Naive thymus-derived CD4-positive, alpha-beta T cell (primary cell): ENCODE measurements at regions of chr4 and their contacts with region 1.

Region 1: GRCh38 chr4:15001869-15002658 is at the start of gene CPEB2:
- DNase-seq: peak; percentile 88 to 95 (median 93)
- ATAC-seq: peak; percentile 81
- H3K4me3 ChIP-seq: peak within 1 kb of the TSS; percentile 99
- H3K4me3 Mint-ChIP-seq: peak within 1 kb of the TSS; percentile 86 to 95 (median 93)
- H3K27ac ChIP-seq: peak within 1 kb of the TSS; percentile 100
- H3K27ac Mint-ChIP-seq: peak within 1 kb of the TSS; percentile 90 to 98 (median 97)
- H3K4me1 ChIP-seq: peaks cover 7 to 10% of the 10 kb centered on the region in 2 donors
- H3K4me1 Mint-ChIP-seq: peaks cover 17 to 29% (median 24%) of the 10 kb centered on the region in 7 donors
- H3K27me3 ChIP-seq: no peaks in the 10 kb centered on the region
- H3K27me3 Mint-ChIP-seq: no peaks in the 10 kb centered on the region
- total RNA-seq, gene CPEB2: 11.1 to 21.7 (median 14.9) TPM

Region 2: DNA sequence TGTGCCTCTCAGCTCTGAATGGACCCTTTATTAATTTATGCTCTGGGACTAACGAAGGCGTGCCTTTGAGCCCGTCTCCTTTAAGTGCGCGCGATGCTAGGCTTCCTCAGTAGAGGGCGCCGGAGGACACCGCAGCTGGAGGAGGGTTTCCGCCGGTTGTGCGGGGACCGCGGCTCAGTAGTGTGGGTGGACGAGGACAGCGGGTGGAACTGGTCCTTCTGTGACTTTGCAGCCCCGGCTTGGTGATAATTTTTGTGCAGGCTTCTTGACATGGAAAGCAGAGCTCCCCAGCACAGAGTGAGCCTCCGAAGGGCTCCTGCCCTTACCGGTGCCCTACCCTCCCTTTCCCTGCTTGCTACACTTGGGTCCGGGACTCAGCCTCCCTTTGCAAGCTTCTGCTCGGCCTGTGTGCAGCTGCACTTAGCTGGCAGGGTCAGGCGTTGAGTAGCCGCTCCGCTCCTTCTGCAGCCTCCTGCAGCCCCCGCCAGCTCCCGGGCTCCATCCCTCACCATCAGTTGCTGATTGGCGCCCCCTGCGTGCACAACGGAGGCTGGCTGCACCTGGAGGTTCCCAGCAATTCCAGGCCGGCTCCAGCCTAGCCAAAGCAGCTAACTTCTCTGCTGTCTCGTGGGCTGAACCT is 1347.8 kb before region 1 on chr4:
- CTCF ChIA-PET with region 1: interaction called, 3 read pairs
- POLR2A ChIA-PET with region 1: interaction called, 4 read pairs
- intact Hi-C with region 1: loop called (anchors 1 to 5 kb)
- DNase-seq: peak; percentile 46 to 84 (median 69)
- ATAC-seq: peak; percentile 97
- H3K4me3 ChIP-seq: peak overlapping the region; percentile 77
- H3K4me3 Mint-ChIP-seq: peak overlapping the region; percentile 77 to 93 (median 90)
- H3K27ac ChIP-seq: no peak overlapping the region
- H3K27ac Mint-ChIP-seq: peak overlapping the region in 5 of 9 donors; percentile 25 to 70 (median 30)
- H3K4me1 ChIP-seq: no peaks in the 10 kb centered on the region
- H3K4me1 Mint-ChIP-seq: peaks cover 12 to 22% (median 16%) of the 10 kb centered on the region in 7 donors
- H3K27me3 ChIP-seq: no peaks in the 10 kb centered on the region
- H3K27me3 Mint-ChIP-seq: peaks cover 0 to 12% (median 4%) of the 10 kb centered on the region in 5 donors

Region 3: GRCh38 chr4:14496408-14496807 is 505.7 kb before region 1 on chr4:
- CTCF ChIA-PET with region 1: no interaction called
- POLR2A ChIA-PET with region 1: no interaction called
- intact Hi-C with region 1: no loop called
- DNase-seq: no peak
- ATAC-seq: no peak
- H3K4me3 ChIP-seq: no peak overlapping the region
- H3K4me3 Mint-ChIP-seq: no peak overlapping the region
- H3K27ac ChIP-seq: no peak overlapping the region
- H3K27ac Mint-ChIP-seq: no peak overlapping the region
- H3K4me1 ChIP-seq: no peaks in the 10 kb centered on the region
- H3K4me1 Mint-ChIP-seq: no peaks in the 10 kb centered on the region
- H3K27me3 ChIP-seq: no peaks in the 10 kb centered on the region
- H3K27me3 Mint-ChIP-seq: peaks cover 0 to 10% (median 0%) of the 10 kb centered on the region in 5 donors

Region 4: GRCh38 chr4:14877246-14878225 is 124.5 kb before region 1 on chr4:
- CTCF ChIA-PET with region 1: no interaction called
- POLR2A ChIA-PET with region 1: interaction called, 3 read pairs
- intact Hi-C with region 1: loop called (anchors 1 to 5 kb)
- DNase-seq: peak in 4 of 9 donors; percentile 3 to 12 (median 8)
- ATAC-seq: peak; percentile 78
- H3K4me3 ChIP-seq: no peak overlapping the region
- H3K4me3 Mint-ChIP-seq: peak overlapping the region in 8 of 10 donors; percentile 5 to 48 (median 38)
- H3K27ac ChIP-seq: no peak overlapping the region
- H3K27ac Mint-ChIP-seq: peak overlapping the region; percentile 26 to 86 (median 62)
- H3K4me1 ChIP-seq: peaks cover 7 to 9% of the 10 kb centered on the region in 2 donors
- H3K4me1 Mint-ChIP-seq: peaks cover 15 to 31% (median 24%) of the 10 kb centered on the region in 7 donors
- H3K27me3 ChIP-seq: no peaks in the 10 kb centered on the region
- H3K27me3 Mint-ChIP-seq: no peaks in the 10 kb centered on the region

Region 5: DNA sequence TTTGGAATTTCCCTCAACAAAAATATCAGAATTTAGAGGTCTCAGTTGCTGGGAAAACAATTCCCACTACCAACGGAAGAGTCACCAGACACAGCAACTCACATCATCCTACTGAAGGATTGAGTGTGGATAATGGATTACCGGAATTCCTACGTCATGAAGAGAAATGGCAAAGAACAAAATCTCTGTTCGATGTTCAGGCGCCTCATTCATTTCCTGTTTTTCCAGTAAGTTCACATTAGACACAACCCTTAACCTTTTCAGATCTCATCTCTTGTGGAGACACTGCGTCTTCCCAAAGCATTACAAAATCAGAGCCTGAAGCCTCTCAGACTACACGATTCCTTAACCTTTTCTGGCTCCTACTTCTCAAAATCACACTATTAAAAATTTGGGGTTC is 58.3 kb before region 1 on chr4:
- CTCF ChIA-PET with region 1: no interaction called
- POLR2A ChIA-PET with region 1: no interaction called
- intact Hi-C with region 1: no loop called
- DNase-seq: no peak
- ATAC-seq: no peak
- H3K4me3 ChIP-seq: no peak overlapping the region
- H3K4me3 Mint-ChIP-seq: no peak overlapping the region
- H3K27ac ChIP-seq: no peak overlapping the region
- H3K27ac Mint-ChIP-seq: no peak overlapping the region
- H3K4me1 ChIP-seq: no peaks in the 10 kb centered on the region
- H3K4me1 Mint-ChIP-seq: no peaks in the 10 kb centered on the region
- H3K27me3 ChIP-seq: no peaks in the 10 kb centered on the region
- H3K27me3 Mint-ChIP-seq: peaks cover 9 to 32% (median 18%) of the 10 kb centered on the region in 5 donors

Region 6: DNA sequence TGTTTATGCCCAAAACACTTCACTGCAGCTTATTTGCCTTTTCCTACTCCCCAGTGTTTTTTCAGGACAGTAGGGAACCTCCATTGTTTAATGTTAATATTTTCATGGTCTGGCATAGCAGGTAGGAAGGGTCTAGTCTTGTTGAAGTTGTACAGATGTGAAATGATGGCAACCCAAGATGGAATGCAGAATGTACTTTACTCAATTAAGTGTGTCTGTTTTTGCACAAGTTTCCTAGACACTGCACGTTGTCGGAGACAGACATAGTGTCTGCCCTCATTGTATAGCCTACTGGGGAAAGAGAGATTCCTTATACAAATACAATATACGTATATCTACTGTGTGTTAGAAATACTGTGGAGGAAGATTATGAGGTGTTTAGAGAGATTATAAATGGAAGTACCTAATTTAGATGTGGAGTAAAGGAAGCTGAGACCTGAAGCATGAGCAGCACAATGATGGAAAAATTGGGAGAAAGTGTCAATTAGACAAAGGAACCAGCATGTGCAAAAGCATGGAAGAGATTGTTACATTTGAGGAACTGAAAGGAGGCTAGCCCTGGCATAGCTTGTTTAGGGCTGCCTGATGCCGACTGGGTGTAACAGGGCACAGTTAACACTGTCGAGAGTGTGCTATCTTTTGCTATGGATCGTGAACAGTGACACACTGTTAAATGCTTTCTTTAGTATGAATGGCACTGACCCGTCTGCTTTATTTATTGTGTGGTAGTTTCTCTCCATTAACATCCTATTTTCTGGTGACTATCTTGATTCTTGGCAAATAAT is 18.6 kb after region 1 on chr4:
- CTCF ChIA-PET with region 1: no interaction called
- POLR2A ChIA-PET with region 1: no interaction called
- intact Hi-C with region 1: loop called in 1 of 2 experiments (anchors 2 kb)
- DNase-seq: no peak
- ATAC-seq: no peak
- H3K4me3 ChIP-seq: no peak overlapping the region
- H3K4me3 Mint-ChIP-seq: no peak overlapping the region
- H3K27ac ChIP-seq: no peak overlapping the region
- H3K27ac Mint-ChIP-seq: no peak overlapping the region
- H3K4me1 ChIP-seq: peaks cover 4 to 5% of the 10 kb centered on the region in 2 donors
- H3K4me1 Mint-ChIP-seq: peaks cover 32 to 62% (median 41%) of the 10 kb centered on the region in 7 donors
- H3K27me3 ChIP-seq: no peaks in the 10 kb centered on the region
- H3K27me3 Mint-ChIP-seq: no peaks in the 10 kb centered on the region

Region 7: DNA sequence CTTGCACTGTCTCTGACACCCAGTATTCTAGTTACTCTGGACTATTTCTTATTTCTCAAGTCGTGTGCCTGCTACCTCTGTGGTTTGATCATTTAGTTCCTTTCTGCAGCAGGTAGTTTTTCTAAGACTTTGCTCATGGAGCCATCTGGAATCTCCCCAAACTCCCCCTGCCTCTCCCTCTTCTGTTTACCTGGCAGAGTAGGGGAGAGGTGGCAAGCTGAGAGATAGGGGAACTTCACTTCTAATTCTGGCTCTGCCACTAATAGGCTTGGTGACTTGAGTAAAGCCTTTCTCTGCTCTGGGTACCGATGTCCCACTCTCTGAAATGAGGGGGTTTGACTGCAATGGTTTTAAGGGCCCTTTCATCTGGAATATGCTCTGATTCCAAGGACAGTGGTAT is 141.5 kb after region 1 on chr4:
- CTCF ChIA-PET with region 1: no interaction called
- POLR2A ChIA-PET with region 1: no interaction called
- intact Hi-C with region 1: no loop called
- DNase-seq: no peak
- ATAC-seq: no peak
- H3K4me3 ChIP-seq: no peak overlapping the region
- H3K4me3 Mint-ChIP-seq: no peak overlapping the region
- H3K27ac ChIP-seq: no peak overlapping the region
- H3K27ac Mint-ChIP-seq: no peak overlapping the region
- H3K4me1 ChIP-seq: no peaks in the 10 kb centered on the region
- H3K4me1 Mint-ChIP-seq: no peaks in the 10 kb centered on the region
- H3K27me3 ChIP-seq: no peaks in the 10 kb centered on the region
- H3K27me3 Mint-ChIP-seq: peaks cover 0 to 14% (median 13%) of the 10 kb centered on the region in 5 donors

Region 8: GRCh38 chr4:15655229-15656037 is 653.4 kb after region 1 on chr4 and contains the start of gene FBXL5:
- CTCF ChIA-PET with region 1: no interaction called
- POLR2A ChIA-PET with region 1: interaction called, 8 read pairs
- intact Hi-C with region 1: loop called (anchors 1 kb)
- DNase-seq: peak; percentile 77 to 92 (median 87)
- ATAC-seq: peak; percentile 92
- H3K4me3 ChIP-seq: peak within 1 kb of the TSS; percentile 87
- H3K4me3 Mint-ChIP-seq: peak within 1 kb of the TSS; percentile 94 to 100 (median 97)
- H3K27ac ChIP-seq: peak within 1 kb of the TSS; percentile 90
- H3K27ac Mint-ChIP-seq: peak within 1 kb of the TSS; percentile 90 to 98 (median 98)
- H3K4me1 ChIP-seq: peaks cover 29% of the 10 kb centered on the region in 2 donors
- H3K4me1 Mint-ChIP-seq: peaks cover 21 to 49% (median 45%) of the 10 kb centered on the region in 7 donors
- H3K27me3 ChIP-seq: no peaks in the 10 kb centered on the region
- H3K27me3 Mint-ChIP-seq: peaks cover 0 to 2% (median 0%) of the 10 kb centered on the region in 5 donors
- total RNA-seq, gene FBXL5: 39.1 to 107 (median 57.4) TPM

Region 9: GRCh38 chr4:15778289-15779241 is 776.5 kb after region 1 on chr4 and contains the start of gene CD38:
- CTCF ChIA-PET with region 1: no interaction called
- POLR2A ChIA-PET with region 1: interaction called, 3 read pairs
- intact Hi-C with region 1: loop called in 1 of 2 experiments (anchors 2 kb)
- DNase-seq: peak; percentile 16 to 67 (median 37)
- ATAC-seq: peak; percentile 66
- H3K4me3 ChIP-seq: peak within 1 kb of the TSS; percentile 71
- H3K4me3 Mint-ChIP-seq: peak within 1 kb of the TSS; percentile 86 to 97 (median 94)
- H3K27ac ChIP-seq: peak within 1 kb of the TSS; percentile 65
- H3K27ac Mint-ChIP-seq: peak within 1 kb of the TSS; percentile 81 to 93 (median 87)
- H3K4me1 ChIP-seq: peaks cover 12 to 32% of the 10 kb centered on the region in 2 donors
- H3K4me1 Mint-ChIP-seq: peaks cover 37 to 82% (median 77%) of the 10 kb centered on the region in 7 donors
- H3K27me3 ChIP-seq: no peaks in the 10 kb centered on the region
- H3K27me3 Mint-ChIP-seq: no peaks in the 10 kb centered on the region
- total RNA-seq, gene CD38: 5.6 to 189 (median 14.3) TPM